CD14-positive monocyte (primary cell): ENCODE measurements at regions of chr11 and their contacts with region 1.

Region 1: DNA sequence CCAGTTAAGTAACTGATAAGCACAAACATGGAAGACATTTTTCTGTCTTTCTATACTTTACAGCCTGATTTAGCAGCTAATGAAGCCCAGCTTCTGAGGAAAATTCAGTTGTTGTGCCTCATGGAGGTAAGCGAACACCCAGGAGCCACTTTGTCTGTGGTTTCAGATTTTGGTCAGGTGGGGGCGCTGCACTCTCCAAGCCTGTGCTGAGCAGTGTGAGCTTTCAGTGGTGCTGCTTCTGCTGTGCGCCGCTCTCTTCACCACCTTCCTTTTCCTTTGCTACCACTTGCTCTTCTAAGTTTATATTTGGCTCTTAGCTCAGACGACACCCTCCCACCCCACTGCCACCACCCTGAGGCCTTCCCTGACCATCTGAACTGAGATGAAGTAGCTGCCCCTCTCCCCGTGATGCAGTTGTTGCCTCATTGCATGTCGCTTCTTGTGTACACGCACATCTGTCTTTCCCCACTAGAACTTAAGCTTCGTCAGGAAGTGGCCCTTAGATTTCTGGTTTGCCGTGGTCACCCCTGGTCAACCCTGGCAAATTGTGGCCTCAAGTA is 14.0 kb downstream of the PSMD13 start:
- DNase-seq: peak; percentile 43 to 59 (median 57)
- H3K4me3 ChIP-seq: no peak overlapping the region
- H3K4me3 Mint-ChIP-seq: no peak overlapping the region
- H3K27ac ChIP-seq: no peak overlapping the region
- H3K27ac Mint-ChIP-seq: peak overlapping the region in 3 of 7 donors; percentile 60 to 84 (median 65)
- H3K4me1 ChIP-seq: no peaks in the 10 kb centered on the region
- H3K4me1 Mint-ChIP-seq: no peaks in the 10 kb centered on the region
- H3K27me3 ChIP-seq: no peaks in the 10 kb centered on the region
- H3K27me3 Mint-ChIP-seq: no peaks in the 10 kb centered on the region
- CTCF ChIP-seq: peak; percentile 79

Region 2: GRCh38 chr11:288328-289144 is 37.7 kb after region 1 on chr11 and contains the start of gene PGGHG:
- intact Hi-C with region 1: loop called in 1 of 2 experiments (anchors 5 kb)
- DNase-seq: peak in 2 of 3 donors; percentile 46 to 63
- H3K4me3 ChIP-seq: peak within 1 kb of the TSS; percentile 48 to 70 (median 55)
- H3K4me3 Mint-ChIP-seq: peak within 1 kb of the TSS; percentile 82 to 95
- H3K27ac ChIP-seq: no peak within 1 kb of the TSS
- H3K27ac Mint-ChIP-seq: peak within 1 kb of the TSS in 3 of 7 donors; percentile 26 to 84 (median 49)
- H3K4me1 ChIP-seq: peaks cover 14 to 20% of the 10 kb centered on the region in 2 donors
- H3K4me1 Mint-ChIP-seq: peaks cover 17% of the 10 kb centered on the region
- H3K27me3 ChIP-seq: peaks cover 0 to 25% of the 10 kb centered on the region in 2 donors
- H3K27me3 Mint-ChIP-seq: peaks cover 29 to 56% (median 36%) of the 10 kb centered on the region in 3 donors
- CTCF ChIP-seq: no peak
- polyA plus RNA-seq, gene PGGHG: 1.6 to 82.9 (median 2.1) TPM

Region 3: GRCh38 chr11:355581-356458 is 105.0 kb after region 1 on chr11:
- intact Hi-C with region 1: loop called (anchors 5 kb)
- DNase-seq: peak; percentile 16 to 45 (median 37)
- H3K4me3 ChIP-seq: peak overlapping the region; percentile 18 to 66 (median 53)
- H3K4me3 Mint-ChIP-seq: peak overlapping the region; percentile 65 to 78
- H3K27ac ChIP-seq: peak overlapping the region in 1 of 2 donors; percentile 26
- H3K27ac Mint-ChIP-seq: peak overlapping the region in 3 of 7 donors; percentile 34 to 74 (median 74)
- H3K4me1 ChIP-seq: peaks cover 11 to 19% of the 10 kb centered on the region in 2 donors
- H3K4me1 Mint-ChIP-seq: peaks cover 17% of the 10 kb centered on the region
- H3K27me3 ChIP-seq: peaks cover 0 to 25% of the 10 kb centered on the region in 2 donors
- H3K27me3 Mint-ChIP-seq: peaks cover 24 to 48% (median 25%) of the 10 kb centered on the region in 3 donors
- CTCF ChIP-seq: no peak